ENCODE measurements at regions of chr3 and their contacts with region 1.

Region 1: DNA sequence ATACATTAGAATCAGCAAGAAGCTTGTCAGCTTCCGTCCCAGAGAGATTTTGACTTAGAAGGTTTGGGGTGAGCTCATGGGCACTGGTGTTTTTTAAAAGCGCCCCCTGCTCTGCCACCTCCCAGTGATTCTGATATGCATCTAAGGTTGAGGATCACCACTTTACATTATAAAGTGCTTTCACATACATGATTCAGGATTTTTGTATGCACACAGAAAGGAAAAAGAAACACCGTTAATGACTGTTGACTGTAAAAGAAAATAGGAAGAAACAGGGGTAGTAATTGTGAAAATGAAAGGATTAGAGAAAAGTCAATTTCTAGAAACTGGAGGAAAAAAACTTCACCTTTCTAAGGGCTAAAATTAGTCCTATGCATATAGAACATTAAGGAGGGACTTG is 104.9 kb upstream of the ZBED2 start:
- DNase-seq: no peak
- ATAC-seq: no peak
- H3K4me3 ChIP-seq: no peak overlapping the region
- H3K4me3 Mint-ChIP-seq: no peak overlapping the region
- H3K27ac ChIP-seq: no peak overlapping the region
- H3K27ac Mint-ChIP-seq: peak overlapping the region in 1 of 2 donors; percentile 31
- H3K4me1 ChIP-seq: no peaks in the 10 kb centered on the region
- H3K4me1 Mint-ChIP-seq: peaks cover 33 to 40% (median 33%) of the 10 kb centered on the region in 3 donors
- H3K27me3 ChIP-seq: no peaks in the 10 kb centered on the region
- H3K27me3 Mint-ChIP-seq: no peaks in the 10 kb centered on the region

Region 2: DNA sequence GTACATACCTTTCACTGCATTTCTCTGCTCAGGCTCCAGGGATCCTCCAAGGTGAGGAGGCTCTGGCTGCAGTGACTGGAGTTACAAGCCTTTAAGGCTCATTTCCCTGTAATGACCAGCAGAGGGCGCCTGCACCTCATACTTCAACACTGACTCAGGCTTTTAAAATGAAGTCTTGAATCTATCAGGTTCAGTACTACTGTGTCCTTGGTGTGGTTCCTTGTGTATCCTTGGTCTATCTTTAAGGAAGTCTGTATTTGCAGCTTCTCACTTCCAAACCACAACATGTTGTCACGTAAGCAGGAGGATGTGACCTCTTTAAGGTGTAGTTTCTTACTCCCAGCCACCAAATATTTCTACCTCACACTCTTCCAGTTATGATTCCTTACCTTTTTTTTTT is 17.5 kb after region 1 on chr3:
- CTCF ChIA-PET with region 1: interaction called, 5 to 16 read pairs
- POLR2A ChIA-PET with region 1: no interaction called
- DNase-seq: peak; percentile 39 to 84 (median 56)
- ATAC-seq: peak; percentile 87 to 89 (median 88)
- H3K4me3 ChIP-seq: no peak overlapping the region
- H3K4me3 Mint-ChIP-seq: no peak overlapping the region
- H3K27ac ChIP-seq: no peak overlapping the region
- H3K27ac Mint-ChIP-seq: peak overlapping the region; percentile 36 to 85
- H3K4me1 ChIP-seq: peaks cover 0 to 4% of the 10 kb centered on the region in 2 experiments
- H3K4me1 Mint-ChIP-seq: peaks cover 0 to 10% (median 4%) of the 10 kb centered on the region in 3 donors
- H3K27me3 ChIP-seq: no peaks in the 10 kb centered on the region
- H3K27me3 Mint-ChIP-seq: no peaks in the 10 kb centered on the region

Region 3: GRCh38 chr3:111735271-111735758 is 35.3 kb after region 1 on chr3:
- CTCF ChIA-PET with region 1: no interaction called
- POLR2A ChIA-PET with region 1: no interaction called
- DNase-seq: no peak
- ATAC-seq: no peak
- H3K4me3 ChIP-seq: no peak overlapping the region
- H3K4me3 Mint-ChIP-seq: no peak overlapping the region
- H3K27ac ChIP-seq: no peak overlapping the region
- H3K27ac Mint-ChIP-seq: no peak overlapping the region
- H3K4me1 ChIP-seq: no peaks in the 10 kb centered on the region
- H3K4me1 Mint-ChIP-seq: no peaks in the 10 kb centered on the region
- H3K27me3 ChIP-seq: no peaks in the 10 kb centered on the region
- H3K27me3 Mint-ChIP-seq: no peaks in the 10 kb centered on the region